ENCODE measurements at regions of chr11 and their contacts with region 1.

Region 1: DNA sequence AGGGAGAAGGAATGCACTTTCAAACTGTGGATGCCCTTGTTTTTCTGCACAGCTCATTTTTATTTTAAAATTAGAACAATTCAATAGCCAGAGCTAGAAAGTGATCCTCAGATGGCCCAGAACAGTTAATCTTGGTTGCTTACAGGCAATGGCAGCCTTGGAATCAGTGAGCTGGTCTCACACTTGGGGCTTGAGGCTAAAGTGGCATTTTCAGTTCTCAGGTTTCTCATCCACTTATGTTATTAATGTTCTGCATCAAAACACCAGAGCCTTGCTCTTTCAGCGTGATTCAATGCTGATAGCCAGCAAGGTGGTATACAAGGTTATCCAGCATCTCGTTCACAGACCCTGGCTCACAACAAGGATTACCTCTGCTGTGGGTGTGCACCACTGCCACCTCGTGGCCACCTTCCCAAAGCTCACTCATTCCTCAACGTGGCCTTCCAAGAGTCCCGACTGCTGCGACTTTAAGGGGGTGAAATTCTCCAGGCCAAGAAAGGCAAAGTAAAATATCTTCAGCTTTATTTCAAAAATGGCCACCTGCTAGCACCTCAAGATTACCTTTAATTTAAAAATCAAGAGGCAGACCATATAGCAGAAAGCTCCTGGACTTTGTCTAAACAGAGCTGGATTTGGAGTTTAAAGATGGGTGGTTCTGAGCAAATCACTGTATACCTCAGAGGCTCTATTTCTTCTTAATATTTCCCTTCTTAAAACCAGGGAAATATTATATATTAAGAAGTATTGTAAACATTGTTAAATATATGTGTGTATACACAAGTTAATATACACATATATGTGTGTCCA is 34.2 kb upstream of the FSHB start:
- DNase-seq: peak in 8 of 9 experiments; percentile 6 to 52 (median 37)
- ATAC-seq: peak; percentile 42
- H3K4me3 ChIP-seq: no peak overlapping the region
- H3K4me3 Mint-ChIP-seq: no peak overlapping the region
- H3K27ac ChIP-seq: no peak overlapping the region
- H3K27ac Mint-ChIP-seq: no peak overlapping the region
- H3K4me1 ChIP-seq: no peaks in the 10 kb centered on the region
- H3K4me1 Mint-ChIP-seq: no peaks in the 10 kb centered on the region
- H3K27me3 ChIP-seq: no peaks in the 10 kb centered on the region
- H3K27me3 Mint-ChIP-seq: peaks cover 8% of the 10 kb centered on the region
- CTCF ChIP-seq: peak; percentile 54

Region 2: GRCh38 chr11:30333405-30333804 is 136.8 kb after region 1 on chr11:
- CTCF ChIA-PET with region 1: interaction called, 4 read pairs
- POLR2A ChIA-PET with region 1: no interaction called
- intact Hi-C with region 1: loop called in 1 of 2 experiments (anchors 2 kb)
- DNase-seq: peak in 1 of 9 experiments; percentile 32
- ATAC-seq: no peak
- H3K4me3 ChIP-seq: no peak overlapping the region
- H3K4me3 Mint-ChIP-seq: no peak overlapping the region
- H3K27ac ChIP-seq: no peak overlapping the region
- H3K27ac Mint-ChIP-seq: peak overlapping the region; percentile 1
- H3K4me1 ChIP-seq: peaks cover 5% of the 10 kb centered on the region
- H3K4me1 Mint-ChIP-seq: peaks cover 44% of the 10 kb centered on the region
- H3K27me3 ChIP-seq: no peaks in the 10 kb centered on the region
- H3K27me3 Mint-ChIP-seq: no peaks in the 10 kb centered on the region
- CTCF ChIP-seq: peak; percentile 33

Measured in CD8-positive, alpha-beta T cell (primary cell).